Mammary epithelial cell (primary cell): ENCODE measurements at regions of chr22 and their contacts with region 1.

Region 1: DNA sequence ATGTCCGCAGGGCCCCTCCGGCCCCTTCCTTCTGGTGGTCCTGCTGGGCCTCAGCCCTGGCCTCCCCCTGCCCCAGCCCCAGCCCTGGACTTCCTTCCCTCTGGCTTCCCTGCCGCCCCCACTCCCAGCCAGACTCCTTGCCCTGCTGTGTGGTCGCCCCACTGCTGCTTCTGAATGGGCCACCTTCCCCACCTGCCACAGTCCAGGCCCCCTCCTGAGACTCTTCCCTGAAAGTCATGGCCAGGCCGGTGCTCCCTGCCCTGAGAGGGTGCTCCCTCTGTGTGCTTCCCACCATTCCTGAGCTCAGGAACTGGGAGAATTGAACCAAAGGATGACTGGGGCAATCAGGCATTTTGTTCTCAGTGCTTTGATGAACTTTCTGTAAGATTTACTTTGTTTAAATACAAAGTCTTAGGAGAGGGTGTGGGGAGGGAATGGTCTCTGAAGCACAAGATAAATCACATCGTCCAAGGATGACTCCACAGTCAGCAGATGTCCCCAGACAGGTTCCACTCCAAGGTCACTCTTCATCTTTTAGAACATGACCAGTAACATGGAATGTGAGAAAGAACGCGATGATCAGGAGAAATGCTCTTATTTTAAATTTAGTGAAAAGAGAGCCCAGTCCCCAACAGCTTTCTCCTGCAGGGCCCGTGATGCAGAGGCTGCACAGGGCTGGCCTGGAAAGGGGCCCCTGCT is 774 bp downstream of the APOBEC3D start:
- DNase-seq: no peak
- H3K4me3 ChIP-seq: peak overlapping the region in 2 of 3 experiments; percentile 30 to 33
- H3K27ac ChIP-seq: no peak overlapping the region
- H3K4me1 ChIP-seq: peaks cover 12% of the 10 kb centered on the region
- H3K27me3 ChIP-seq: no peaks in the 10 kb centered on the region
- CTCF ChIP-seq: no peak

Region 2: DNA sequence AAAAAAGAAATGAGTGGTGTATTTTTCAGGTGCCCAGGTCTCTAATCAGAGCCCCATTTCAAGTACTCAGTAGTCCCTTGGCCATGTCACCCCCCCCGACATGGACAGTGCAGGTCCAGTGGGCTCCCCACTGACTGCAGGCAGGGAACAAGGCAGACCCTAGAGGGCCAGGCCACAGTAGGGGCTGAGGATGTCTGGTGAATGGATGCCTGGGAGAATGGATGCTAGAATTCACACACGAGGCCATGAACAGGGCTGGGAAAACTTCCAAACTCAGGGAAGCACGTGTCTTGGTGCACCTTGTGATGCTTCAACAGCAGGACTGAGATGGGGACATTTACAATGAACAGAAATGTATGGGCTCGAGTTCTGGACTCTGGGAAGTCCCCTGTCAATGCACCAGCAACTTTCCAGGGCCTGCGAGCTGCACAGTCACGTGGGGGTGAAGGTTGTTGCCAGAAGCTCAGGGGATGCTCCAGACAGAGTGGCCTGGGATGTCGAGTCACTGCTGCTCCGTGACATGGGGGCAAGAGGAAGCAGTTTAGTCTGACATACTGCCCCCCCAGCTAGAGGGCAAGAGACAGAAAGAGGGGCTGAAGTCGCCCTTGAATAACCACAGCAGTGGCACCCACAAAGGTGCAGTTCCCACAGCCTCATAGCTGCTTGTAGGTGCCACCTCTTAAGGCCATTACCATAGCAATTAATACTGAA is 58.5 kb after region 1 on chr22:
- CTCF ChIA-PET with region 1: no interaction called
- dilution Hi-C with region 1: loop called (anchors 5 kb)
- in situ Hi-C with region 1: no loop called
- intact Hi-C with region 1: no loop called
- DNase-seq: no peak
- H3K4me3 ChIP-seq: no peak overlapping the region
- H3K27ac ChIP-seq: no peak overlapping the region
- H3K4me1 ChIP-seq: peaks cover 10% of the 10 kb centered on the region
- H3K27me3 ChIP-seq: no peaks in the 10 kb centered on the region
- CTCF ChIP-seq: no peak

Region 3: GRCh38 chr22:39092111-39092862 is 70.6 kb after region 1 on chr22:
- CTCF ChIA-PET with region 1: interaction called, 18 read pairs
- dilution Hi-C with region 1: no loop called
- in situ Hi-C with region 1: no loop called
- intact Hi-C with region 1: no loop called
- DNase-seq: no peak
- H3K4me3 ChIP-seq: no peak overlapping the region
- H3K27ac ChIP-seq: no peak overlapping the region
- H3K4me1 ChIP-seq: peaks cover 50% of the 10 kb centered on the region
- H3K27me3 ChIP-seq: no peaks in the 10 kb centered on the region
- CTCF ChIP-seq: no peak

Region 4: GRCh38 chr22:39405346-39406085 is 383.8 kb after region 1 on chr22:
- CTCF ChIA-PET with region 1: no interaction called
- dilution Hi-C with region 1: no loop called
- in situ Hi-C with region 1: no loop called
- intact Hi-C with region 1: no loop called
- DNase-seq: no peak
- H3K4me3 ChIP-seq: no peak overlapping the region
- H3K27ac ChIP-seq: no peak overlapping the region
- H3K4me1 ChIP-seq: peaks cover 5% of the 10 kb centered on the region
- H3K27me3 ChIP-seq: no peaks in the 10 kb centered on the region
- CTCF ChIP-seq: no peak